CD4-positive, alpha-beta T cell (primary cell): ENCODE measurements at regions of chr17 and their contacts with region 1.

Region 1: GRCh38 chr17:47895856-47896671 is at the start of gene SP2:
- DNase-seq: peak; percentile 97 to 100 (median 99)
- ATAC-seq: peak; percentile 86
- H3K4me3 ChIP-seq: peak within 1 kb of the TSS; percentile 96
- H3K4me3 Mint-ChIP-seq: peak within 1 kb of the TSS; percentile 100
- H3K27ac ChIP-seq: peak within 1 kb of the TSS; percentile 95 to 98
- H3K27ac Mint-ChIP-seq: peak within 1 kb of the TSS; percentile 94
- H3K4me1 ChIP-seq: peaks cover 34% of the 10 kb centered on the region
- H3K4me1 Mint-ChIP-seq: peaks cover 58% of the 10 kb centered on the region
- H3K27me3 ChIP-seq: no peaks in the 10 kb centered on the region
- H3K27me3 Mint-ChIP-seq: no peaks in the 10 kb centered on the region
- CTCF ChIP-seq: no peak
- total RNA-seq, gene SP2: 19.9 to 21.5 TPM

Region 2: GRCh38 chr17:47649153-47649971 is 246.7 kb before region 1 on chr17 and contains the start of gene KPNB1:
- CTCF ChIA-PET with region 1: no interaction called
- POLR2A ChIA-PET with region 1: interaction called, 24 read pairs
- intact Hi-C with region 1: loop called in 1 of 2 experiments (anchors 5 kb)
- DNase-seq: peak; percentile 94 to 99 (median 96)
- ATAC-seq: peak; percentile 83
- H3K4me3 ChIP-seq: peak within 1 kb of the TSS; percentile 75
- H3K4me3 Mint-ChIP-seq: peak within 1 kb of the TSS; percentile 100
- H3K27ac ChIP-seq: peak within 1 kb of the TSS; percentile 81 to 84
- H3K27ac Mint-ChIP-seq: peak within 1 kb of the TSS; percentile 94
- H3K4me1 ChIP-seq: peaks cover 46% of the 10 kb centered on the region
- H3K4me1 Mint-ChIP-seq: peaks cover 50% of the 10 kb centered on the region
- H3K27me3 ChIP-seq: no peaks in the 10 kb centered on the region
- H3K27me3 Mint-ChIP-seq: no peaks in the 10 kb centered on the region
- CTCF ChIP-seq: no peak
- total RNA-seq, gene KPNB1: 145 to 151 TPM

Region 3: GRCh38 chr17:47802341-47803022 is 93.6 kb before region 1 on chr17:
- CTCF ChIA-PET with region 1: no interaction called
- POLR2A ChIA-PET with region 1: no interaction called
- intact Hi-C with region 1: no loop called
- DNase-seq: peak; percentile 37 to 74 (median 47)
- ATAC-seq: peak; percentile 97
- H3K4me3 ChIP-seq: no peak overlapping the region
- H3K4me3 Mint-ChIP-seq: no peak overlapping the region
- H3K27ac ChIP-seq: no peak overlapping the region
- H3K27ac Mint-ChIP-seq: no peak overlapping the region
- H3K4me1 ChIP-seq: peaks cover 5% of the 10 kb centered on the region
- H3K4me1 Mint-ChIP-seq: no peaks in the 10 kb centered on the region
- H3K27me3 ChIP-seq: no peaks in the 10 kb centered on the region
- H3K27me3 Mint-ChIP-seq: peaks cover 2% of the 10 kb centered on the region
- CTCF ChIP-seq: peak; percentile 66

Region 4: DNA sequence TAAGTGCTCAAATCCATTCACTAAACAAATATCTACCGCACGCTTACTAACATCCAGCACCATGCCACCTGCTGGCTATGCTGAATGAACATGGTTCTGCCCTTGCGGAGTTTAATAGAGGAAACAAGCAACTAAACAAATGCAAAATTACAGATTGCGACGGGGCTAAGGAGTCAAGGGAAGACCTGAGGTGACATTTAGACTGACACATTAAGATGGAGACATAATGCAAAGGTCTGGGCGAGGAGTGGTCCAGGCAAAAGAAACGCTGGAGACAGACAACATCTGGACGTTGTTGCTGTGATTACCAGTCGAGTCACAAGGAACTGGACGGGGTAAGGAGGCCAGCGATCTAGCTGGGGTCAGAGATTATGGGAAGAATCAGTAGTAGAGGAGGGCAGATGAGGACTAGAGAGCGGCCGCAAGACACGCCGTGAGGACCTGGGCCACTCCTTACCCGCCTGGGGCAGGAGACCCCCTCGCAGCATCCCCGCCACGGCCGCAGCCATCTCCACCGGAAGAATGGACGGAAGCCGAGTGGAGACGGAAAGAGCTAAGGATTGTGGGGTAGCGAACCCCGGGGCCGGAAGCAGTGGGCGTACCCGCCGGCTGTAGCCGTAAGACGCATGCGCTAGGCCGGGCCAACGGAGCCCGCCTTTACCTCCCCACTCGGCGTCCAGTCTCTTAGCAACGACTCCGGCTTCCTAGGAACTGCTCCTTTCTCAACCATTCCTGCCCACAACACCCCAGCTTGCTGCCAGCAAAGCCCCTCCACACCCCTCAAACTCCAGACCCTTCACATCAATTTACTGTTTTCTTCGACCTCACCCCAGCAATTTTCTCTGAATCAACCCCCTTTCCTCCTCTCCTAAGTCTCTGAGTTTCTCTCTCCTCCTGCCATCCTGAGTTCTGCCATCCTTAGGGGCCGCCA is 64.8 kb before region 1 on chr17 and contains the starts of genes LRRC46 and MRPL10:
- CTCF ChIA-PET with region 1: no interaction called
- POLR2A ChIA-PET with region 1: interaction called, 53 read pairs
- intact Hi-C with region 1: loop called in 1 of 2 experiments (anchors 2 kb)
- DNase-seq: peak; percentile 84 to 95 (median 88)
- ATAC-seq: peak; percentile 86
- H3K4me3 ChIP-seq: peak within 1 kb of the TSS; percentile 92
- H3K4me3 Mint-ChIP-seq: peak within 1 kb of the TSS; percentile 89
- H3K27ac ChIP-seq: peak within 1 kb of the TSS; percentile 78 to 90
- H3K27ac Mint-ChIP-seq: peak within 1 kb of the TSS; percentile 78
- H3K4me1 ChIP-seq: peaks cover 66% of the 10 kb centered on the region
- H3K4me1 Mint-ChIP-seq: peaks cover 58% of the 10 kb centered on the region
- H3K27me3 ChIP-seq: no peaks in the 10 kb centered on the region
- H3K27me3 Mint-ChIP-seq: no peaks in the 10 kb centered on the region
- CTCF ChIP-seq: no peak
- total RNA-seq, gene LRRC46: 0.42 to 0.85 TPM
- total RNA-seq, gene MRPL10: 49.0 to 51.4 TPM

Region 5: GRCh38 chr17:47883589-47884427 is 12.3 kb before region 1 on chr17:
- CTCF ChIA-PET with region 1: no interaction called
- POLR2A ChIA-PET with region 1: interaction called, 14 read pairs
- intact Hi-C with region 1: no loop called
- DNase-seq: no peak
- ATAC-seq: no peak
- H3K4me3 ChIP-seq: no peak overlapping the region
- H3K4me3 Mint-ChIP-seq: peak overlapping the region; percentile 31
- H3K27ac ChIP-seq: no peak overlapping the region
- H3K27ac Mint-ChIP-seq: no peak overlapping the region
- H3K4me1 ChIP-seq: peaks cover 41% of the 10 kb centered on the region
- H3K4me1 Mint-ChIP-seq: peaks cover 35% of the 10 kb centered on the region
- H3K27me3 ChIP-seq: peaks cover 0 to 2% of the 10 kb centered on the region in 2 experiments
- H3K27me3 Mint-ChIP-seq: peaks cover 5% of the 10 kb centered on the region
- CTCF ChIP-seq: no peak

Region 6: DNA sequence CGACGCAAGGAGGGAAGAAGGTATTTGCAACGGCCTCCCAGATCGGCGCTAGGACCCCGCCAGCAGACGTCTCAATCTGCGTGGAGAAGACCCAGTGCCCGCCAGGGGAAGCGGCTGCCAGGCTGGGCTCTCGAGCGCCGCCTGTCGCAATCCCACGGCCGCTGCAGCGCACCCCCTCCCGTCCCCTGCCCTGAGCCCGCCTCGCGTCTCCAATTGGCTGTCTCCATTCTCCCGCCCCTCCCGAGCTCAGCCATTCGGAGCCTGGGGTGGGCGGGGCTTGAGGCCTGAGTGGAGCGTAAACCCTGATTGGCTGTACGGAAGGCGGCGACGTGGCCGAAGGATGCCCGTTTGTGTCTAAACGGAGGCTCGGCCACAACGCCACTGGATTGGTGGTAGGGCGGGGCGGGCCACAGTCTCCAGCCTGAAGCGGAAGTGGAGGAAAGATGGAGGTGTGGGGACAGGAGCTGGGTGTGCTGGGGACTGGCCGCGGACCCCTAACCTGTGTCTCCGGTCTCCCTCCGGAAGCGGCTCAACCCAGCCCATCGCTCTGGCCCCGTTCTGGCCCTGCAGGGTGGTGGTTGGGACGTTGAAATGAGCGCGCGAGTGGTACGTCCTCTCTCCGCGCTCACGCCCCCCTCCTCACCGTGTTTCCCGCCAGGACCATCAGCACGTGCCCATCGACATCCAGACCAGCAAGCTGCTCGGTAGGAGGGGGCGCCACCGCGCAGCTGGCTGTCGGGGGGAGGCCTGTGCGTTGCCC is 74.8 kb after region 1 on chr17 and contains the start of gene CDK5RAP3:
- CTCF ChIA-PET with region 1: interaction called, 6 read pairs
- POLR2A ChIA-PET with region 1: interaction called, 56 read pairs
- intact Hi-C with region 1: loop called (anchors 1 kb)
- DNase-seq: peak; percentile 95 to 99 (median 98)
- ATAC-seq: peak; percentile 98
- H3K4me3 ChIP-seq: peak within 1 kb of the TSS; percentile 99
- H3K4me3 Mint-ChIP-seq: peak within 1 kb of the TSS; percentile 99
- H3K27ac ChIP-seq: peak within 1 kb of the TSS; percentile 32 to 72
- H3K27ac Mint-ChIP-seq: peak within 1 kb of the TSS; percentile 86
- H3K4me1 ChIP-seq: peaks cover 26% of the 10 kb centered on the region
- H3K4me1 Mint-ChIP-seq: peaks cover 26% of the 10 kb centered on the region
- H3K27me3 ChIP-seq: no peaks in the 10 kb centered on the region
- H3K27me3 Mint-ChIP-seq: no peaks in the 10 kb centered on the region
- CTCF ChIP-seq: peak; percentile 92
- total RNA-seq, gene CDK5RAP3: 206 to 224 TPM

Region 7: GRCh38 chr17:48011405-48012150 is 115.5 kb after region 1 on chr17:
- CTCF ChIA-PET with region 1: no interaction called
- POLR2A ChIA-PET with region 1: no interaction called
- intact Hi-C with region 1: no loop called
- DNase-seq: peak in 11 of 14 experiments; percentile 18 to 68 (median 39)
- ATAC-seq: peak; percentile 76
- H3K4me3 ChIP-seq: peak overlapping the region; percentile 43
- H3K4me3 Mint-ChIP-seq: peak overlapping the region; percentile 71
- H3K27ac ChIP-seq: no peak overlapping the region
- H3K27ac Mint-ChIP-seq: no peak overlapping the region
- H3K4me1 ChIP-seq: peaks cover 14% of the 10 kb centered on the region
- H3K4me1 Mint-ChIP-seq: peaks cover 16% of the 10 kb centered on the region
- H3K27me3 ChIP-seq: peaks cover 32 to 46% of the 10 kb centered on the region in 2 experiments
- H3K27me3 Mint-ChIP-seq: peaks cover 66% of the 10 kb centered on the region
- CTCF ChIP-seq: peak; percentile 46

Region 8: DNA sequence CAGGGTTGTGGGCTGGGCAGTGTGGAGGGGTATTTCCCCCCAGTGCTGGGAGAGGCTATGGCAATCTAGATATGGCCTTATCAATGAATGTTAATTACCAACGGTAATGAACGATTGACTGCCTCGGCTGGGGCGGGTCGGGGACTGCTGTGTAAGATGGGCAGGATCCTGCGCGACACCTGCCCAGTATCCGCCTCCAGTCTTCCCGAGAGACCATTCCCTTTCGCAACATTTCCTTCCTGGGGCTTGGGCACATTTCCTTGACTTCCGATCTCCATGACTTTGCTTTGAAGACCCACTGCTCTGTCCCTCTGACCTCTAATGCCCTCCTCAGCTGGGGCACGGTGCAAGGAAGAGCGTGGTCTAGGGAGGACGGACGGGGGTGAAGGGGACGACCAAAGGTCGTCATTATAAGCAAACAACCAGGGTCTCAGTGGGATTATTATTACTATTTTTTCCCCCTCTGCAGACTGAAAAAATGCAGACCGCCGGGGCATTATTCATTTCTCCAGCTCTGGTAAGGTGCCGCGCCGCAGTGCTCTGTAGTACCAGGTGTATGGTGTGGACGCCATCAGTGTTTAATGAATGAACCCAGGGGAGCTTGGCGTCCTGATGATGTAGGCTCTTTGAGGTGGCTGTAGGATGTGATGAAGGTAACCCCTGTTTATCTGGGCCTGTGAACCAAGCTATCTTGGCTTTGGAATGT is 997.0 kb after region 1 on chr17:
- CTCF ChIA-PET with region 1: no interaction called
- POLR2A ChIA-PET with region 1: interaction called, 10 read pairs
- intact Hi-C with region 1: no loop called
- DNase-seq: peak in 2 of 14 experiments; percentile 43 to 49
- ATAC-seq: no peak
- H3K4me3 ChIP-seq: peak overlapping the region; percentile 74
- H3K4me3 Mint-ChIP-seq: peak overlapping the region; percentile 90
- H3K27ac ChIP-seq: peak overlapping the region; percentile 80 to 86
- H3K27ac Mint-ChIP-seq: peak overlapping the region; percentile 91
- H3K4me1 ChIP-seq: peaks cover 25% of the 10 kb centered on the region
- H3K4me1 Mint-ChIP-seq: peaks cover 22% of the 10 kb centered on the region
- H3K27me3 ChIP-seq: no peaks in the 10 kb centered on the region
- H3K27me3 Mint-ChIP-seq: no peaks in the 10 kb centered on the region
- CTCF ChIP-seq: no peak